ENCODE measurements at regions of chr12 and their contacts with region 1.

Region 1: DNA sequence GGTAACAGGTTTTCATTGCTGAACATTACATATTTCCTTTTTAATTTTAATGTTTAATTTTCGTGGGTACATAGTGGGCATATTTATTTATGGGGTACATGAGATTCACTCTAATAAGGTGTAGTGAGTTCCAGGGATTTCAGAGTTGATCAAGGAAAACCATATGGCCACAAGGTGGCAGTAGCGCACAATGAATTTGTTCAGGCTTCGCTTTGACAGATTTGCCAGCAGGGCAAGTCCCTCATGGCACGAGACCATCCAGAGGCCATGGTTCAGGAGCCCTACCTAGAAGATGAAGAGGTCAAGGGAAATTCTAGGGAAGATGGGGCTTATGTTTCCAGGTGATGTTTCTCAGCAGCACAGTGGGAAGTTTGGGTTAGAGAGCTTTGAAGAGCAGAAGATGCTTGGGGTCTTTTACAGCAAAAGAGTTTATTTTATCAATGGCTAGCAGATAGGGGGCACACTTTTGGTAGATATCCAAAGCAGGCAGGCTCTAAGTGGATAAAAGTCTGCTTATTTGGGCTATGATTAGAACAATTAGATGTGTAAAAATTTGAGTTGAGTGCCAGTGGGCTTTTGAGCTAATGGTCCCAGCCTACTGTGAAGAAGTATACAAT is 1004.4 kb downstream of the AACS start:
- DNase-seq: peak; percentile 82
- H3K4me3 Mint-ChIP-seq: no peak overlapping the region
- H3K27ac Mint-ChIP-seq: no peak overlapping the region
- H3K4me1 Mint-ChIP-seq: peaks cover 9% of the 10 kb centered on the region
- H3K27me3 Mint-ChIP-seq: no peaks in the 10 kb centered on the region
- CTCF ChIP-seq: peak; percentile 77

Region 2: DNA sequence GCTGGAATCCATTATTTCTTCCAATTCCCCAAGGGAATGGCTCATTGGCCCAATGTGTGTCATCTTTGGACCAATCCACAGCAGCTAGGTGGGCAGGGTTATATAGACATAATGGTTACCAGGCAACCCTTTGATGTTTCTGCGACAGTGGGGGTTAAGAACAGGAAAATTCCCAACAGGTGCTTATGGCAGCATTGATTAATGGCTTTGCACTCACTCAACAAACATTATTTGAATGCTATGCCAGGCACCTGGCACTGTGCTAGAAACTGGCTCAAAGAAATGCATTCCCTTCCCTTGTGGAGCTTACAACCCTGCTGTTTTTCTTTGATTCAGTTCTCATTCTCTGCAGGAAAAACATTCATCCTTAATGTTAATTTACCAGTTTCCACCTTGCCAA is 216.5 kb after region 1 on chr12:
- CTCF ChIA-PET with region 1: no interaction called
- intact Hi-C with region 1: no loop called
- DNase-seq: no peak
- H3K4me3 Mint-ChIP-seq: no peak overlapping the region
- H3K27ac Mint-ChIP-seq: no peak overlapping the region
- H3K4me1 Mint-ChIP-seq: no peaks in the 10 kb centered on the region
- H3K27me3 Mint-ChIP-seq: no peaks in the 10 kb centered on the region
- CTCF ChIP-seq: no peak

Region 3: GRCh38 chr12:126483145-126484068 is 413.8 kb after region 1 on chr12:
- CTCF ChIA-PET with region 1: no interaction called
- intact Hi-C with region 1: no loop called
- DNase-seq: no peak
- H3K4me3 Mint-ChIP-seq: no peak overlapping the region
- H3K27ac Mint-ChIP-seq: peak overlapping the region; percentile 67
- H3K4me1 Mint-ChIP-seq: peaks cover 18% of the 10 kb centered on the region
- H3K27me3 Mint-ChIP-seq: no peaks in the 10 kb centered on the region
- CTCF ChIP-seq: no peak

Region 4: DNA sequence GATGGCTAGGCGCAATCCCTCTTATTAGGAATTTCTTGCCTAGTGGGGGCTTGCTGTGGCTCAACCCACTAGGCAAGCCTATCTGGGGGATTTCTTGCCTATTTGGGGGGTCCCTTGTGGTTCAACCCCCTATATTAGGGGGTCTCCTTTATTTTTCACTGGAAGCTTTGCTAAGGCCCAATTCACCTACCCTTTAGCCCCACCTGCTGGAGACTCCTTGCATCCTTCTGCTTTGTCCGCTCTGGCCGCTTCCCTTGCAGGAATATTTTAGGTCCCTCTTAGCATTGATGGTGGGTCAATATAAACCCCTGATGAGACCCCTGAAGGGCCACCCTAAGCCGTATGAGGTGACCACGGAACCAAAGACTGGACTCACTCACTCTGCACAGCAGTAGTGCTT is 547.7 kb after region 1 on chr12:
- CTCF ChIA-PET with region 1: no interaction called
- intact Hi-C with region 1: loop called (anchors 1 kb)
- DNase-seq: peak; percentile 67
- H3K4me3 Mint-ChIP-seq: no peak overlapping the region
- H3K27ac Mint-ChIP-seq: no peak overlapping the region
- H3K4me1 Mint-ChIP-seq: no peaks in the 10 kb centered on the region
- H3K27me3 Mint-ChIP-seq: no peaks in the 10 kb centered on the region
- CTCF ChIP-seq: peak; percentile 68

Region 5: GRCh38 chr12:126747530-126748149 is 678.0 kb after region 1 on chr12:
- CTCF ChIA-PET with region 1: no interaction called
- intact Hi-C with region 1: loop called (anchors 1 kb)
- DNase-seq: peak; percentile 78
- H3K4me3 Mint-ChIP-seq: no peak overlapping the region
- H3K27ac Mint-ChIP-seq: no peak overlapping the region
- H3K4me1 Mint-ChIP-seq: no peaks in the 10 kb centered on the region
- H3K27me3 Mint-ChIP-seq: no peaks in the 10 kb centered on the region
- CTCF ChIP-seq: peak; percentile 95

Measured in Calu3 (cell line).